ENCODE measurements at regions of chr10 and their contacts with region 1.

Region 1: GRCh38 chr10:69800109-69800508 is 1.6 kb upstream of the COL13A1 start:
- DNase-seq: peak in 2 of 4 donors; percentile 60 to 76
- ATAC-seq: peak; percentile 58
- H3K4me3 ChIP-seq: no peak overlapping the region
- H3K27ac ChIP-seq: no peak overlapping the region
- H3K4me1 ChIP-seq: peaks cover 13 to 18% of the 10 kb centered on the region in 2 donors
- H3K27me3 ChIP-seq: peaks cover 8 to 59% of the 10 kb centered on the region in 2 donors
- CTCF ChIP-seq: peak; percentile 49 to 52

Region 2: DNA sequence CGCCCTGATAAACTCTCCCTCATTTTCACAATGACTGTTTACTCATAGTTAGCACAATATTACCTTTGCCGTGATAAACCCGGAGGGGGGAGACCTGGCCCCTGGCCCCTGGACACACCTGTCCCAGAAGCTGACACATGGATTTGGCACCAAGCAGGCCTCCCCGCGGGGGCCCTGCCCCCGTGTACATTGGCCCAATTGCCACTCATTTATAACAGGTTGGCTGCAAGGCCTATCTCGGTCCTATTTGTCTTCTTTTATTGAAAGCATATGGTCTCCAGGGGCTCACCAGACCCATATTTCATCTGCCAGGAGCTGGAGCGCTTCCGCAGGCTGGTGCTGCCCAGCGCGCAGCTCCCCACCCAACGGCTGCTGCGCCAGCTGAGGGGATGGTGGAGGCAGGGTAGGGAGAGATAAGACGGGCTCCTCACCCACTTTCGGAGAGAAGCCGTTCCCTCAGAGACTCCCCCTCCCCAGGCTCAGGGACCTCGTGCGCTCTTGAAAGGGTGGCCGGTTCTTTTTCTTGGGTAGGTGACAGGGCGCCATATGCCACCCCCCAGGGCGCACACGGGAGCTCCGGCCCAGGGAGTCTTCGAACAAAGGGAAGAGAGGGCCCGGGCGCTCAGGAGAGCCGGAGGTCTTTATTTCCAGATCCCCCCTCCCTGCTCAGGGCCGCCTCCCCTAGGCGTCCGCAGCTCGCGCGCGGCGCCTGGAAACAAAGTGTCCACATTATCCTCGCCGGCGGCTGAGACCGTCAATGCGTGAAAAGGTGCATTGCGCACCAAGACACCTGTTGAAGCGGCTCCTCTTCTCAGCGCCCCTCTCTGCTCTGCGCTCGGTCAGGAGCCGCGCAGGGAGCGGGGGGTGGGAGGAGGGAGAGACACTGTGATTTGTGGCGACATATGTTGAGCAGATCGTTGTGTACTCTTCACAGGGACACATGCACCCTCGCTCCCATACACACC is 222.6 kb before region 1 on chr10:
- intact Hi-C with region 1: no loop called
- DNase-seq: no peak
- ATAC-seq: no peak
- H3K4me3 ChIP-seq: no peak overlapping the region
- H3K27ac ChIP-seq: no peak overlapping the region
- H3K4me1 ChIP-seq: peaks cover 2 to 8% of the 10 kb centered on the region in 2 donors
- H3K27me3 ChIP-seq: peaks cover 70 to 99% of the 10 kb centered on the region in 2 donors
- CTCF ChIP-seq: no peak

Region 3: GRCh38 chr10:69600761-69601330 is 199.3 kb before region 1 on chr10:
- intact Hi-C with region 1: no loop called
- DNase-seq: no peak
- ATAC-seq: no peak
- H3K4me3 ChIP-seq: no peak overlapping the region
- H3K27ac ChIP-seq: no peak overlapping the region
- H3K4me1 ChIP-seq: no peaks in the 10 kb centered on the region
- H3K27me3 ChIP-seq: peaks cover 0 to 35% of the 10 kb centered on the region in 2 donors
- CTCF ChIP-seq: no peak

Region 4: DNA sequence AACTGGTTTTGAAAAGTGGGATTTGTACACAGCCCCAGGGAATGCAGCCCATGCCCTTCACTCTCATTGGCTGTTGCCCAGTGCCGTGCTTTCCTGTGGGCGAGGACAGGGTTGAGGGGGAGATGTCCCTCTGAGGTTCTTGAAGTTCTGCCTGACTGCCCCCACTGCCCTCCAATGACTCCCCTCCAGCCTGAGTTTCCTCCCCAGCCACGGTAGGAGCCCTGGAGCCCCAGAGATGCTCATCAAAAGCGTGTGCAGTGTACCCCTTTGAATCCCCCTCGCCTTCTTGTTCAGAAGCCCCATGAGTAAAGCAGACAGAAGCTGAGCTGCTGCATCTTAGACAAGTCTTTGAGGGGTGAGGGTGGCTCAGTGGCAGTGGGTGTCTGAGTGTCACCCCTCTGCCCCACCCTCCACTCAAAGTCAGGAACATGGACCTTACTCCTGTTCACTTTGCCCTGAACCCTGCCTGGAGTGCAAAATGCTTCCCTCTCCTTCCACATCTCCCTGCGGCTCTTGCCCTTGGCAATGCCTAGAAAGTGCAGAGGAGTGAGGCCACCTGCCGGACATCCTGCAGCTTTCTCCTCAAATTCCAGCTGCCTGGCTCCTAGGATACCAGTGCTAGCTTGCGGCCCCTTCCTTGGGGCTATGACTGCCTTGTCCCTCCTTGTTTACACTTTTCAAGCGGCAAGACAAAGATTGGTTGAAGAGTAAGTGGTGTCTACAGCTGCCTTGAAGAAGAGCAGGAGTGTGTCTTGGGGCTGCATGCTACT is 150.1 kb before region 1 on chr10:
- intact Hi-C with region 1: loop called in 1 of 2 experiments (anchors 10 kb)
- DNase-seq: no peak
- ATAC-seq: no peak
- H3K4me3 ChIP-seq: no peak overlapping the region
- H3K27ac ChIP-seq: no peak overlapping the region
- H3K4me1 ChIP-seq: no peaks in the 10 kb centered on the region
- H3K27me3 ChIP-seq: no peaks in the 10 kb centered on the region
- CTCF ChIP-seq: no peak

Region 5: DNA sequence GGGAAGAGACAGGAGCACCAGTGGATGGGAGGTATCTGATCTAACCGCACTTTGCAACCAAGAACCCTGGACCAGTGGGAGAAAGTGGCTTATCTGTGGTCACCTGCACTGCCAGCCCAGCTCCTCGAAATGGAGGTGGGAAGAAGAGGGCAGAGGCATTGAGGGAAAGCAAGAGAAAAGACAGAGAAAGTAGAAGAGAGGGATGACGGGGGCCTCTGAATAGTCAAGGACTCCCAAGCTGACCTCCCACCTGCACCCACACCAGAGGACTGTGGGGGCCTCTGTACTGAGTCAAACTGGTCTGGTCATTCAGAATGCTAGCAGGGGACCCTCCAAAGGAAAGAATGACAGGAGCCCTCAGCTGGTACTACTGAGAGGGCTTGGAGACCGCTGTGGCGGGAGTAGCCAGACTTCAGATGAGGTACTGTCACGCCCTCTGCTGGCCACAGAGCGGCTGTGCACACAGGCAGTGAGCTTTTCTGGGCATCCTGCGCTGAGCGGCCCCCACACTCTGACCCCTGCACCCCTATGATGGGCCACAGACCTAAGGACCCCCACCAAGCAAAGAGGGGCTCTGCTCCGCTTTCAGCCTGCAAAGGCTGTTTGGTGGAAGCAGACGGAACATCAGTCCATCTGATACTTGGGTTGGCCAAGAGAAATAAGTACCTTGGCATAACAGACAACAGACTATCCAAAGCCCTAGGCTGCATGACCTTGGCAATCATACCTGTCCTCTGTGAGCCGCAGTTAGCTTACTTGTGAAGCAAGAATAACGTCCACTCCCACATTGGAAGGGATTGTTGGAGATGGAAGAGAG is 114.5 kb after region 1 on chr10:
- intact Hi-C with region 1: loop called in 1 of 2 experiments (anchors 10 kb)
- DNase-seq: peak in 3 of 4 donors; percentile 62 to 83 (median 63)
- ATAC-seq: peak; percentile 95
- H3K4me3 ChIP-seq: no peak overlapping the region
- H3K27ac ChIP-seq: no peak overlapping the region
- H3K4me1 ChIP-seq: peaks cover 0 to 3% of the 10 kb centered on the region in 2 donors
- H3K27me3 ChIP-seq: peaks cover 0 to 21% of the 10 kb centered on the region in 2 donors
- CTCF ChIP-seq: peak; percentile 83 to 89

Region 6: DNA sequence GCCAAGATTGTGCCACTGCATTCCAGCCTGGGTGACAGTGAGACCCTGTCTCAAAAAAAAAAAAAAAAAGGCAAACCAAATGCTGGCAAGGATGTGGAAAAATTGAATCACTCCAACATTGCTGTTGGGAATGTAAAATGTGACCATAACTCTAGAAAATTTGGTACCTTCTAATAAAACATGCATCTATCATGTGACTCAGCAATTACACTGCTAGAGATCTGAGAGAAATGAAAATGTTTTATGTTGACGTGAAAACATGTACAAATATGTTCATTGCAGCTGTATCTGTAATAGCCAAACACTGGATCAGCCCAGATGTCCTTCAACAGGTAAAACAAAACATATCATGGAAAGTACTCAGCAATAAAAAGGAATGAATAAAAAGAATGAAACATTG is 401.0 kb after region 1 on chr10:
- intact Hi-C with region 1: no loop called
- DNase-seq: no peak
- ATAC-seq: no peak
- H3K4me3 ChIP-seq: no peak overlapping the region
- H3K27ac ChIP-seq: peak overlapping the region in 1 of 2 donors; percentile 8
- H3K4me1 ChIP-seq: no peaks in the 10 kb centered on the region
- H3K27me3 ChIP-seq: no peaks in the 10 kb centered on the region
- CTCF ChIP-seq: no peak

Measured in left lung (tissue), 14 donors.